Left ventricle myocardium superior (tissue), 1 donor: ENCODE measurements at regions of chr1 and their contacts with region 1.

Region 1: GRCh38 chr1:84122780-84123382 is 21.2 kb upstream of the PRKACB start:
- DNase-seq: peak; percentile 38
- ATAC-seq: peak; percentile 70

Region 2: GRCh38 chr1:83889707-83890106 is 233.2 kb before region 1 on chr1:
- intact Hi-C with region 1: no loop called
- DNase-seq: no peak
- ATAC-seq: no peak

Region 3: GRCh38 chr1:83931658-83932253 is 191.1 kb before region 1 on chr1:
- intact Hi-C with region 1: loop called (anchors 5 kb)
- DNase-seq: no peak
- ATAC-seq: peak; percentile 71

Region 4: DNA sequence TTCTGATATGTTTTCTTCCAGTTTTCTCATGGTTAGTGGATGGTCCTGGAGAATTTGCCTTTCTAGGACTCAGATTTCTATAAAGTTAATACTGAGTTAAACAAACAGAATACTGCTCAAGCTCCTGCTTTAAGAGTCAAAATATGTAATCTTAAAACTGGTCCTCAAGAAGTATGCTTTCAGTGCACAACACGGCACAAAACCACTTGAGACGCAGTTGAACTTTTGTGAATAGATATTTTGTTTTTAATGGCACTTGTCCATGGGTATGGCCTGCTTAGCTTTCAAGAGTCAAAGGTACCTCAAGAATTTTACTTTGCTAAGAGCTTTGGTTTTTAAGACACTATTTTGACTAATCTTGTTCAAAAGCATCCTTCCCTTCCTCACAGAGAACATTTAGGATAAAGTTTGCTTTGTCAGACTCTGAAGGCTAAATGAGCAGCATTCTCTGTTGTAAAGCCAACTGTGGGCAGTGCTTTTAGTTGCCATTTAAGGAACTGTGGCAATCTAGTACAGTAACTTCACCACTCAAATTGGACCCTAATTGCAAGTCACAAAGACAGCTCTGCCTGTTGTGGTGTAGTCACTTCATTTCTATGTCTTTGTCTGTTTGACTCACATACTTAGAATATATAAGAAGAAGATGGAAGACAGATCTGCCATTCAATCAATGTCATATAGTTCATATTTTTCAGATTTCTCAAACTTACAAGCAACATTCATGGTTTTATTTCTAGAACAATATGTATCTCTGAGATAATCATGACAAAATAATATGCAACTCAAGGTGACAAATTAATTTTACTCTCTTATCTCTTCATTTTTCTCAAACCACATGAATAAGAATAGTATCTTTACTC is 207.5 kb after region 1 on chr1:
- intact Hi-C with region 1: no loop called
- DNase-seq: no peak
- ATAC-seq: no peak